Common myeloid progenitor, CD34-positive (primary cell): ENCODE measurements at regions of chr19 and their contacts with region 1.

Region 1: DNA sequence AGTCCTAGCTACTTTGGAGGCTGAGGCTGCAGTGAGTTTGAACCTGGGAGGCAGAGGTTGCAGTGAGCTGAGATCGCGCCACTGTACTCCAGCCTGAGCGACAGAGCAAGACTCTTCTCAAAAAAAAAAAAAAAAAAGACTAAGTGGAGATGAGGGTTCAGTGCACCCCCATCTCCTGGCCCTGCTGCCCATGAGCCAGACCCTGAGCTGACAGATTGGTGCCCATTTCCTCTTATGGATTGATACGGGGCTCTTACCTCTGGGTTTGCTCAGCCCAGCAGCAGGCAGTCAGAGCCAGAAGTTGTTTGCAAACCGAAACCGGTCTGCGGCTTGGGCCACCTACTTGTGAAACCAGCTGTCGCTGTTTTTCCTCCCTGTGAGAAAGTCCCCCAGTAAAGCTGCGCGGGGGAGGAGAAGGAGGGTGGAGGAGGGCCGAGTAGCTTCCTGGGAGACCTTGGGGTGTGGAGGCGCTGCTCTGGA is 36.9 kb downstream of the ARRDC2 start:
- DNase-seq: peak; percentile 80 to 96 (median 95)
- H3K4me3 ChIP-seq: peak overlapping the region in 6 of 7 experiments; percentile 15 to 71 (median 59)
- H3K27ac ChIP-seq: peak overlapping the region in 1 of 2 experiments; percentile 27
- H3K4me1 ChIP-seq: peaks cover 0 to 40% (median 19%) of the 10 kb centered on the region in 4 experiments
- H3K27me3 ChIP-seq: no peaks in the 10 kb centered on the region

Region 2: GRCh38 chr19:18013210-18014111 is 31.4 kb before region 1 on chr19:
- CTCF ChIA-PET with region 1: interaction called, 11 read pairs
- POLR2A ChIA-PET with region 1: interaction called, 4 read pairs
- DNase-seq: no peak
- H3K4me3 ChIP-seq: no peak overlapping the region
- H3K27ac ChIP-seq: no peak overlapping the region
- H3K4me1 ChIP-seq: peaks cover 0 to 42% (median 35%) of the 10 kb centered on the region in 4 experiments
- H3K27me3 ChIP-seq: no peaks in the 10 kb centered on the region

Region 3: DNA sequence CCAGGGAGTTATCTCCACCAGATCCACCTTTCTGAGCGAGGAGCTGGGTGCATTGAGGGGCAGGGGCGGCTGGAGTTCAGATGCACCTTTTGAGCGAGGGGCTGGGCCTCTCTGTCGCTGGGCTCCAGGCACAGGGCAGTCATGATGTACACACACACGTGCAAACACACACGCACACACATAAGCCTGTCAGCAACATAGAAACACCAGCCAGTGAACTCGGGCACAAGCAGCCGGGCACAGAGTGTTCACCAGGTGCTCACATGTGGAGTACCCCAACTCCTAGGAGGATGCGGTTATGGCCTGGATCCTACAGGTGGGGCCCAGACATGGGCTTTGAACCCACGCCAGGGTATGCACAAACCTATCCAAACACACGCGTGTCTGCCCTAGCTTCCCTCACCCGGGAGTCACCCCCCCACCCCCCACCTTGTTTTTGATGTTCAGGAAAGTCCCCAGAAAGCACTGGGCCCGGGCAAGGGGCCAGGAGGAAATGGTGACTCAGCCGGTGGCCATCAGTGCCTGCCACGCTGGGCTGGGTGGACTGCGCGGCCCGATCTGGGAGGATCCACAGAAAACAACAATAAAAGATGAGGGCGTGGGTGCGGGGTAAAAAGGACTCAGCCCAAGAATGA is 23.6 kb before region 1 on chr19:
- CTCF ChIA-PET with region 1: interaction called, 5 read pairs
- POLR2A ChIA-PET with region 1: interaction called, 10 read pairs
- DNase-seq: peak; percentile 91 to 96 (median 96)
- H3K4me3 ChIP-seq: peak overlapping the region in 4 of 7 experiments; percentile 30 to 64 (median 47)
- H3K27ac ChIP-seq: peak overlapping the region; percentile 93 to 96
- H3K4me1 ChIP-seq: peaks cover 2 to 72% (median 65%) of the 10 kb centered on the region in 4 experiments
- H3K27me3 ChIP-seq: no peaks in the 10 kb centered on the region